Endothelial cell of umbilical vein (primary cell): ENCODE measurements at regions of chr17 and their contacts with region 1.

Region 1: GRCh38 chr17:38674749-38675615 is at the start of gene EPOP:
- DNase-seq: peak; percentile 85
- H3K4me3 ChIP-seq: peak within 1 kb of the TSS; percentile 32 to 63 (median 41)
- H3K27ac ChIP-seq: no peak within 1 kb of the TSS
- H3K4me1 ChIP-seq: peaks cover 14% of the 10 kb centered on the region
- H3K27me3 ChIP-seq: peaks cover 28 to 39% of the 10 kb centered on the region in 2 experiments
- CTCF ChIP-seq: no peak
- POLR2A ChIP-seq: no peak
- total RNA-seq, gene EPOP: 2.6 and 2.9 TPM in 2 replicates

Region 2: DNA sequence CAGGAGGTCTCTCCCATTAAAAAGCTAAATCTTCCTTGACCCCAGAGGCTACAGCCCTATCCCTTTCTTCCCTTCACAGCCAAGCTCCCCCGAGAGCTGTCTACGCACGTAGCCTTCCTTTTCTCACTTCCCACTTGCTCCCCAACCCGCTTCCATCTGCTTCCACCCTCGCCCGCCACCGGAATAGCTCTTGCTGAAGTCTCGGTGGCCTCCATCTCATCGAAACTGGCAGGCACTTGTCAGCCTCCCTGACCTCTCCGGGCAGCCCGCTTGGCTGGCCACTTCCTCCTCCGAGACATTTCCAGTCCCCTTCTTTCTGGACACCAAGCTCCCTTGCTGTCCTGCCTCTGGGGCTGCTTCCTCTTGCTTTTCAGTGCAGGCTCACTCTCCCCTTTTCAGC is 10.5 kb after region 1 on chr17:
- CTCF ChIA-PET with region 1: interaction called, 26 read pairs
- POLR2A ChIA-PET with region 1: no interaction called
- dilution Hi-C with region 1: no loop called
- intact Hi-C with region 1: no loop called
- DNase-seq: no peak
- H3K4me3 ChIP-seq: no peak overlapping the region
- H3K27ac ChIP-seq: no peak overlapping the region
- H3K4me1 ChIP-seq: peaks cover 6% of the 10 kb centered on the region
- H3K27me3 ChIP-seq: no peaks in the 10 kb centered on the region
- CTCF ChIP-seq: no peak
- POLR2A ChIP-seq: no peak

Region 3: GRCh38 chr17:38702166-38702899 is 27.4 kb after region 1 on chr17:
- CTCF ChIA-PET with region 1: interaction called, 39 read pairs
- POLR2A ChIA-PET with region 1: no interaction called
- dilution Hi-C with region 1: no loop called
- intact Hi-C with region 1: loop called (anchors 1 kb)
- DNase-seq: peak; percentile 77
- H3K4me3 ChIP-seq: peak overlapping the region; percentile 31 to 59 (median 47)
- H3K27ac ChIP-seq: peak overlapping the region; percentile 27
- H3K4me1 ChIP-seq: peaks cover 44% of the 10 kb centered on the region
- H3K27me3 ChIP-seq: peaks cover 0 to 2% of the 10 kb centered on the region in 2 experiments
- CTCF ChIP-seq: no peak
- POLR2A ChIP-seq: peak; percentile 44

Region 4: GRCh38 chr17:38709864-38710603 is 35.1 kb after region 1 on chr17:
- CTCF ChIA-PET with region 1: interaction called, 39 read pairs
- POLR2A ChIA-PET with region 1: no interaction called
- dilution Hi-C with region 1: no loop called
- intact Hi-C with region 1: loop called (anchors 1 kb)
- DNase-seq: no peak
- H3K4me3 ChIP-seq: no peak overlapping the region
- H3K27ac ChIP-seq: no peak overlapping the region
- H3K4me1 ChIP-seq: peaks cover 12% of the 10 kb centered on the region
- H3K27me3 ChIP-seq: no peaks in the 10 kb centered on the region
- CTCF ChIP-seq: no peak
- POLR2A ChIP-seq: no peak

Region 5: DNA sequence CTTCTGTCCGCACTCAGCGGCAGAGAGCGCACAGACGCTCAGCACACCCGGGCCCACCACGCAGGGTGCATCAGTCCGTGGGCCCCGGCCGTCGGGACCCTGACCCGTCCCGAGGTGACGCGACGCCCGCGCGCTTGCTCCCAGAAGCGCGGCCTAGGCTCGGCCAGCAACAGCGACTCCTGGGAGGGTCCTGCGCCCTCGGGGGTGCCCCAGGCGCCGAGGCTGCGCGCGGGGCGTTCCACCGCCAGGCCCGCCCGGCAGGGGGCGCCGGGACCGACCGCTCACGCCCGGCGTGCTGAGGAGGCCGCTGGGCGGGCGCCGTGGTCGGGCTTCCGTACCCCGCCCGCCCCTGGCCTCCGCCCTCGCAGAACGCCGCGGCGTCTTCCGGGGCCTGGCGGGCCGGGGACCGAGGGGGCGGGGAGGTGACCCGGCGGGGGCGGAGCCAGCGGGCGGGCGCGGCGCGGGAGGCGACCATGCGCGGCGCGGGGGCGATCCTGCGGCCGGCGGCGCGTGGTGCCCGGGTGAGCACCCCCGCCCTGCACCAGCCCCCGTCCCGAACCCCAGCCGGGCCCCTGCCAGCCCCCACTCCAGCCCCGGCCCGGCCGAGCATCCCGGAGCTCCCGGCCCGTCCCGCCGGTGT is 55.0 kb after region 1 on chr17 and contains the start of gene CISD3:
- CTCF ChIA-PET with region 1: interaction called, 138 read pairs
- POLR2A ChIA-PET with region 1: interaction called, 3 read pairs
- dilution Hi-C with region 1: no loop called
- intact Hi-C with region 1: loop called (anchors 1 kb)
- DNase-seq: peak; percentile 63
- H3K4me3 ChIP-seq: peak within 1 kb of the TSS; percentile 58 to 68 (median 64)
- H3K27ac ChIP-seq: peak within 1 kb of the TSS; percentile 25
- H3K4me1 ChIP-seq: peaks cover 27% of the 10 kb centered on the region
- H3K27me3 ChIP-seq: no peaks in the 10 kb centered on the region
- CTCF ChIP-seq: peak; percentile 62 to 77
- POLR2A ChIP-seq: peak; percentile 58
- total RNA-seq, gene CISD3: 22.6 and 23.7 TPM in 2 replicates